ENCODE measurements at regions of chr9 and their contacts with region 1.

Region 1: GRCh38 chr9:131755541-131756198 is 15.8 kb upstream of the RAPGEF1 start:
- DNase-seq: peak; percentile 73
- ATAC-seq: peak; percentile 99
- H3K4me3 ChIP-seq: no peak overlapping the region
- H3K27ac ChIP-seq: no peak overlapping the region
- H3K4me1 ChIP-seq: no peaks in the 10 kb centered on the region
- H3K27me3 ChIP-seq: peaks cover 30% of the 10 kb centered on the region
- CTCF ChIP-seq: peak; percentile 81
- POLR2A ChIP-seq: no peak
- RAD21 ChIP-seq: peak; percentile 67

Region 2: GRCh38 chr9:130857864-130858738 is 897.6 kb before region 1 on chr9:
- CTCF ChIA-PET with region 1: no interaction called
- POLR2A ChIA-PET with region 1: no interaction called
- dilution Hi-C with region 1: no loop called
- in situ Hi-C with region 1: no loop called
- intact Hi-C with region 1: no loop called
- DNase-seq: peak; percentile 97
- ATAC-seq: peak; percentile 63
- H3K4me3 ChIP-seq: no peak overlapping the region
- H3K27ac ChIP-seq: peak overlapping the region; percentile 71
- H3K4me1 ChIP-seq: peaks cover 37% of the 10 kb centered on the region
- H3K27me3 ChIP-seq: no peaks in the 10 kb centered on the region
- CTCF ChIP-seq: no peak
- POLR2A ChIP-seq: peak; percentile 84
- RAD21 ChIP-seq: peak; percentile 11; the same call in 1 of the 2 replicates

Region 3: DNA sequence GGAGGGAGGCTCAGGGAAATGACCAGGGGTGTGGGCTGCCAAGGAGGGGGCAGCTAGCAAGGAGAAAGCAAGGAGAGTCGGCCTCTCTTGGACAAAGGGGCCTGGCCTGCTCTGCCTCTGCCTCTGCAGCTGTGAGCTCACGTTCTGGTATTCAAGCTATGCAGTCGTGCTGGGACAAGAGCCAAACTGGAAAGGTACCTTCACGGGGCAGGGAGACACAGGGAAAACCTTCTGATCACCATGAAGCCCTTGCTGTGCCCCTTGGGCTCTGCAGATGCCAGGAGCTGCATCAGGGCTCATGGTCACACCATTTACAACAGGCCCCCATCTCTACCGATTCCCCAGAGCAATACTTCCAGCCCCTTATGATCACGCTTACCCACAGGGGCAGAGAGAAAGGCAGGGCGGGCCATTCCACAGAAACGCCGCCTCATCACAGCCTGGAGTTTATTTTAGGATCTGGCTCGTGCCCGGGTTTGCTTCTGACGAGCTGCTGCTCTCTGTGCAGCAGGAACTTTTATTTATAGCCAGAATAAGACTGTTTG is 147.1 kb before region 1 on chr9:
- CTCF ChIA-PET with region 1: no interaction called
- POLR2A ChIA-PET with region 1: no interaction called
- dilution Hi-C with region 1: no loop called
- in situ Hi-C with region 1: no loop called
- intact Hi-C with region 1: no loop called
- DNase-seq: peak; percentile 87
- ATAC-seq: peak; percentile 88
- H3K4me3 ChIP-seq: peak overlapping the region; percentile 8; the same call in 1 of the 2 replicates
- H3K27ac ChIP-seq: peak overlapping the region; percentile 78
- H3K4me1 ChIP-seq: peaks cover 35% of the 10 kb centered on the region
- H3K27me3 ChIP-seq: no peaks in the 10 kb centered on the region
- CTCF ChIP-seq: 0 out of 2 replicates have a peak, but pooled peaks have one; percentile 3
- POLR2A ChIP-seq: no peak
- RAD21 ChIP-seq: peak; percentile 18; the same call in 1 of the 2 replicates

Region 4: DNA sequence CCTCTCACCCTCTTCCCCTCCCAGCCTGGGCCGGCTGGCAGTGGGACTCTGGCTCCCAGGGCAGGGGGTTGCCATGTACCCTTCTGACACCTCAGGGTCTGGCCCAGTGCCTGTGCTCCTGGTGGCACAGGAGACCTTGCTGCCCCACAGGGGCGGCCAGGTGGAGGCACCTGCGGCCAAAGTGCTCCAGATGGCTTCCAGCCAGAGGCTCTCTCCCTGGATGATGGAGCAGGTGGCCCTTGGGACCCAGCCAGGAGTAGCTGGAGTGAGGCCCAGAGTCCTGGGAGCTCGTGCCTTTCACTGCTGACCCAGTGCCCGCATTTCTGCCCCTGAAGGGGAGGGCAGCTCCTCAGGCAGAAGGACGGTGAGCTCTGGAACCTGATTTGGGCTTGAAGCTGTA is 493.5 kb after region 1 on chr9:
- CTCF ChIA-PET with region 1: interaction called, 19 read pairs
- POLR2A ChIA-PET with region 1: no interaction called
- dilution Hi-C with region 1: no loop called
- in situ Hi-C with region 1: loop called (anchors 5 kb)
- intact Hi-C with region 1: loop called (anchors 1 kb)
- DNase-seq: no peak
- ATAC-seq: no peak
- H3K4me3 ChIP-seq: no peak overlapping the region
- H3K27ac ChIP-seq: no peak overlapping the region
- H3K4me1 ChIP-seq: no peaks in the 10 kb centered on the region
- H3K27me3 ChIP-seq: peaks cover 35% of the 10 kb centered on the region
- CTCF ChIP-seq: no peak
- POLR2A ChIP-seq: no peak
- RAD21 ChIP-seq: no peak

Region 5: DNA sequence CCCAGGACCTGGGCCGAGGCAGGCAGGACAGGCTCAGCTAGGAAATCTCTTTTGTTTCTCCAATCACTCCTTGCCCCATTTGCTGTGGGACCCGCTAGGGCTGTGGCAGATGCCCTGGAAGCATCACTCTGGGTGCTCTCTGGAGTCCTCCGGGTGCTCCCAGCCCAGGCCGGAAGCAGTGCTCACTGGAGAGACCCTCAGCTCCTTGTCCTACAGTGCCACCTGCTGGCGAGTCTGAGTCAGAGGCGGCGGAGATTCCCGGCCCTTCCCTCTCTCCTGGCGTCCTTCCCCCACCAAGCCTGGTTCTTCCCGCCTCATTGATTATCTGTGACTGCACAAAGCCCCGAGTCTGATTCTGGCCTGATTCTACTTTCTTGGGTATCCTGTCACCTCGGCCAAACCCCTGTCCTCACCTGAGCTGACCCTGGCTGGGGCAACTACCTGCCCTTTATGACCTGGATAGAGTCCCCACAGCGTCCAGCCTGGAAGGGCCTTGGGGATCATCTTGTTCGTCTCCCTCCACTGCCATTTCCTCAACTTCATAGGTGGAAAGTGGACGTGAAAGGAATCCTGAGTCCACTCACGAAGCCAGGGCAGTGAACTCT is 819.4 kb after region 1 on chr9:
- CTCF ChIA-PET with region 1: no interaction called
- POLR2A ChIA-PET with region 1: no interaction called
- dilution Hi-C with region 1: no loop called
- in situ Hi-C with region 1: no loop called
- intact Hi-C with region 1: loop called (anchors 5 kb)
- DNase-seq: peak; percentile 67
- ATAC-seq: peak; percentile 98
- H3K4me3 ChIP-seq: no peak overlapping the region
- H3K27ac ChIP-seq: no peak overlapping the region
- H3K4me1 ChIP-seq: no peaks in the 10 kb centered on the region
- H3K27me3 ChIP-seq: peaks cover 57% of the 10 kb centered on the region
- CTCF ChIP-seq: peak; percentile 86
- POLR2A ChIP-seq: 0 out of 2 replicates have a peak, but pooled peaks have one; percentile 28
- RAD21 ChIP-seq: peak; percentile 93

Measured in IMR-90 (cell line).